CD4-positive, alpha-beta T cell (primary cell): ENCODE measurements at regions of chr6 and their contacts with region 1.

Region 1: GRCh38 chr6:169665289-169665688 is 36.5 kb downstream of the WDR27 start:
- DNase-seq: no peak
- ATAC-seq: no peak
- H3K4me3 ChIP-seq: no peak overlapping the region
- H3K4me3 Mint-ChIP-seq: no peak overlapping the region
- H3K27ac ChIP-seq: no peak overlapping the region
- H3K27ac Mint-ChIP-seq: no peak overlapping the region
- H3K4me1 ChIP-seq: no peaks in the 10 kb centered on the region
- H3K4me1 Mint-ChIP-seq: peaks cover 10% of the 10 kb centered on the region
- H3K27me3 ChIP-seq: no peaks in the 10 kb centered on the region
- H3K27me3 Mint-ChIP-seq: no peaks in the 10 kb centered on the region
- CTCF ChIP-seq: no peak

Region 2: DNA sequence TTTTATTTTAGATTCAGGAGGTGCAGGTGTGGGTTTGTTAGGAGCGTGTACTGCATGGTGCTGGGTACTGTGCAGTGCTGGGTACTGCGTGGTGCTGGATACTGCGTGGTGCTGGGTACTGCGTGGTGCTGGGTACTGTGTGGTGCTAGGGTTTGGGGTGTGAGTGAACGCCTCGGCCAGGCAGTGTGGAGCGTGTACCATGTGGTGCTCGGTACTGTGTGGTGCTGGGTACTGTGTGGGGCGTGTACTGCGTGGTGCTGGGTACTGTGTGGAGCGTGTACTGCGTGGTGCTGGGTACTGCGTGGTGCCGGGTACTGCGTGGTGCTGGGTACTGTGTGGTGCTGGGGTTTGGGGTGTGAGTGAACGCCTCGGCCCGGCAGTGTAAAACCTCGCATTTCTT is 26.4 kb before region 1 on chr6:
- CTCF ChIA-PET with region 1: no interaction called
- POLR2A ChIA-PET with region 1: no interaction called
- intact Hi-C with region 1: loop called in 1 of 2 experiments (anchors 1 kb)
- DNase-seq: no peak
- ATAC-seq: no peak
- H3K4me3 ChIP-seq: no peak overlapping the region
- H3K4me3 Mint-ChIP-seq: no peak overlapping the region
- H3K27ac ChIP-seq: no peak overlapping the region
- H3K27ac Mint-ChIP-seq: no peak overlapping the region
- H3K4me1 ChIP-seq: no peaks in the 10 kb centered on the region
- H3K4me1 Mint-ChIP-seq: no peaks in the 10 kb centered on the region
- H3K27me3 ChIP-seq: no peaks in the 10 kb centered on the region
- H3K27me3 Mint-ChIP-seq: no peaks in the 10 kb centered on the region
- CTCF ChIP-seq: no peak

Region 3: GRCh38 chr6:169689247-169689646 is 24.0 kb after region 1 on chr6:
- CTCF ChIA-PET with region 1: no interaction called
- POLR2A ChIA-PET with region 1: no interaction called
- intact Hi-C with region 1: no loop called
- DNase-seq: no peak
- ATAC-seq: no peak
- H3K4me3 ChIP-seq: no peak overlapping the region
- H3K4me3 Mint-ChIP-seq: no peak overlapping the region
- H3K27ac ChIP-seq: no peak overlapping the region
- H3K27ac Mint-ChIP-seq: no peak overlapping the region
- H3K4me1 ChIP-seq: no peaks in the 10 kb centered on the region
- H3K4me1 Mint-ChIP-seq: no peaks in the 10 kb centered on the region
- H3K27me3 ChIP-seq: no peaks in the 10 kb centered on the region
- H3K27me3 Mint-ChIP-seq: no peaks in the 10 kb centered on the region
- CTCF ChIP-seq: no peak